AG04449 (cell line): ENCODE measurements at regions of chr7 and their contacts with region 1.

Region 1: DNA sequence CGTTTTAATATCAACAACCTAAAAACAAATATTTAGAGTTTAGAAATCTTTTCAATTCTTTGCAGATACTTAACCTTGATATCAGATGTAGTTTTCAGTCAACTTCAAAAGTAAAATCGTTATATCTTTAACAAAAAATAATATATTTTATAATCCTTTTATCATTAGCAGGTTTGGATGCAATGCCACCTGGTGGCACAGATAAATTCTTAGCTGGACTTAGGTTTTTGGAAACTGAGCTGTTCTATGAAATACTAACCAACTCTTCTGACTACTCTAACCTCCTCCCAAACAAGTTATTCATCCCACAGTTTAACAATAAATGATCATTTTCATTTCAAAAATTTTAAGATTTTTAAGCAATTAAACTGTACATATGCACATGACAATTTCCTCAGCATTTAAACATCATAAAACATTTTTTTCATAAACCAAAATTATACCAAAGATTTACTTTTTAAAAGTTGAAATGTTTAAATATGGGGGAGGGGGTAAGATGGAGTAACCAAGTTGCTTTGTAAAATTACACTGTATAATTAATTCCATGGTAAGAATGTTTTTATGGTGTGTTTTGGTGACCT is 56.9 kb downstream of the HIBADH start:
- DNase-seq: no peak
- H3K4me3 ChIP-seq: no peak overlapping the region
- CTCF ChIP-seq: no peak

Region 2: DNA sequence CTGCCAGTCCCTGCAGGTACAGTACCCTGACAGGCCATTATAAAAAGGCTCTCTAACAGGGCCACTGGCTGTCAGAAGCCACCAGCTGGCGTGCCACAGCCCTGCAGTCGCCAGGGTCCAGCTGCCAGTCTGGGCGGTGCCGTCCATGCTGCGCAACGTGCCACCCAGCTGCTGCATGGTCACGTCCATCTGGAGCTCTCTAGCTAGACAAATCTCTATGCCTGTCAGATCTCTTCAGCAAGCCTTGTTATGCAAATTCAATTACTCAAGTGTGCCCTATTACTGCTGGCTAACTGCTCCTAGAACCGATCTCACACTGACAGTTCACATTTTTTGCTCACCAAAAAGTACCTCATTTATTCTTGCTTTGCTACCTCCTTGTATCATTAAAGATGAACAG is 19.0 kb before region 1 on chr7:
- CTCF ChIA-PET with region 1: interaction called, 17 read pairs
- POLR2A ChIA-PET with region 1: no interaction called
- DNase-seq: no peak
- H3K4me3 ChIP-seq: no peak overlapping the region
- CTCF ChIP-seq: no peak

Region 3: GRCh38 chr7:27593226-27593625 is 12.6 kb before region 1 on chr7:
- CTCF ChIA-PET with region 1: interaction called, 17 read pairs
- POLR2A ChIA-PET with region 1: no interaction called
- DNase-seq: no peak
- H3K4me3 ChIP-seq: no peak overlapping the region
- CTCF ChIP-seq: no peak

Region 4: GRCh38 chr7:27616914-27617548 is 11.3 kb after region 1 on chr7:
- CTCF ChIA-PET with region 1: interaction called, 21 read pairs
- POLR2A ChIA-PET with region 1: no interaction called
- DNase-seq: no peak
- H3K4me3 ChIP-seq: no peak overlapping the region
- CTCF ChIP-seq: no peak

Region 5: GRCh38 chr7:27774717-27775328 is 169.0 kb after region 1 on chr7:
- CTCF ChIA-PET with region 1: interaction called, 16 read pairs
- POLR2A ChIA-PET with region 1: no interaction called
- DNase-seq: no peak
- H3K4me3 ChIP-seq: no peak overlapping the region
- CTCF ChIP-seq: peak; percentile 58